ENCODE measurements at regions of chr11 and their contacts with region 1.

Region 1: GRCh38 chr11:111841370-111842053 is 29.9 kb downstream of the ALG9 start:
- DNase-seq: peak; percentile 70
- H3K4me3 Mint-ChIP-seq: no peak overlapping the region
- H3K27ac Mint-ChIP-seq: no peak overlapping the region
- H3K4me1 Mint-ChIP-seq: peaks cover 16% of the 10 kb centered on the region
- H3K27me3 Mint-ChIP-seq: no peaks in the 10 kb centered on the region

Region 2: DNA sequence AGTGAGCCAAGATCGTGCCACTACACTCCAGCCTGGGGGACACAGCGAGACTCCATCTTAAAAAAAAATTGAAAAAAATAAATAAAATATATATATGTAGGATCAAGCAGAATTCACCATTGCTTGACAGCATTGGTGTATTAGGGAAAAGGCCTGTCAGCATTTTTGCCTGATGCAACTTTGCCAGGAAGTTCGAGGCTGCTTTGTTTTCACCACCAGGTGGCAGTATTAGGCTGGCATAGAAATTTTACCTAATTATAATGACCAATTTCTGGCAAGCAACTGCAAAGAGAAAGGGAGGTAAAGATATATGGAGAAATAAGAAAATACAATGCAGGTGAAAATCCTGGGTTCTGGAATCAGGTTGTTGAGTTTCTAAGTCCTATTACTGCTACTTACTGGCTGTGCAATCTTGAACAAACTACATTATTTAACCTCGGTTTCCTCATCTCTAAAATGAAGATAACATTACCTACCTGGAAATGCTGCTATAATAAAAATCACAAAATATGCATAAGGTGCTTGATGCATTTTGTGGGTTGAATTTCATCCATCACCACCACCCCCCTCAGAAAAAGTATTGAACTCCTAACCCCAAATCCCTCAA is 276.3 kb before region 1 on chr11:
- intact Hi-C with region 1: loop called (anchors 1 kb)
- DNase-seq: peak; percentile 28
- H3K4me3 Mint-ChIP-seq: no peak overlapping the region
- H3K27ac Mint-ChIP-seq: no peak overlapping the region
- H3K4me1 Mint-ChIP-seq: no peaks in the 10 kb centered on the region
- H3K27me3 Mint-ChIP-seq: no peaks in the 10 kb centered on the region

Region 3: GRCh38 chr11:111586388-111586831 is 255.1 kb before region 1 on chr11:
- intact Hi-C with region 1: loop called (anchors 1 kb)
- DNase-seq: no peak
- H3K4me3 Mint-ChIP-seq: no peak overlapping the region
- H3K27ac Mint-ChIP-seq: no peak overlapping the region
- H3K4me1 Mint-ChIP-seq: no peaks in the 10 kb centered on the region
- H3K27me3 Mint-ChIP-seq: peaks cover 6% of the 10 kb centered on the region

Region 4: GRCh38 chr11:111766093-111766833 is 75.2 kb before region 1 on chr11 and contains the start of gene PPP2R1B:
- intact Hi-C with region 1: loop called (anchors 1 kb)
- DNase-seq: peak; percentile 60
- H3K4me3 Mint-ChIP-seq: peak within 1 kb of the TSS; percentile 96
- H3K27ac Mint-ChIP-seq: peak within 1 kb of the TSS; percentile 97
- H3K4me1 Mint-ChIP-seq: peaks cover 43% of the 10 kb centered on the region
- H3K27me3 Mint-ChIP-seq: no peaks in the 10 kb centered on the region
- total RNA-seq, gene PPP2R1B: 58.1 and 61.4 TPM in 2 replicates

Measured in activated T-helper 1 cell treated with anti-CD3 and anti-CD28 coated beads, Interleukin-12 subunit alpha, Interleukin-12 subunit beta, Interleukin-2, Interleukin-4 antibody, amounts not matched to agents 30 ng/mL and 10 ng/mL and 1 ng/mL, durations not matched to agents 14 hours and 24 hours and 36 hours (primary cell).